ENCODE measurements at regions of chr20 and their contacts with region 1.

Region 1: DNA sequence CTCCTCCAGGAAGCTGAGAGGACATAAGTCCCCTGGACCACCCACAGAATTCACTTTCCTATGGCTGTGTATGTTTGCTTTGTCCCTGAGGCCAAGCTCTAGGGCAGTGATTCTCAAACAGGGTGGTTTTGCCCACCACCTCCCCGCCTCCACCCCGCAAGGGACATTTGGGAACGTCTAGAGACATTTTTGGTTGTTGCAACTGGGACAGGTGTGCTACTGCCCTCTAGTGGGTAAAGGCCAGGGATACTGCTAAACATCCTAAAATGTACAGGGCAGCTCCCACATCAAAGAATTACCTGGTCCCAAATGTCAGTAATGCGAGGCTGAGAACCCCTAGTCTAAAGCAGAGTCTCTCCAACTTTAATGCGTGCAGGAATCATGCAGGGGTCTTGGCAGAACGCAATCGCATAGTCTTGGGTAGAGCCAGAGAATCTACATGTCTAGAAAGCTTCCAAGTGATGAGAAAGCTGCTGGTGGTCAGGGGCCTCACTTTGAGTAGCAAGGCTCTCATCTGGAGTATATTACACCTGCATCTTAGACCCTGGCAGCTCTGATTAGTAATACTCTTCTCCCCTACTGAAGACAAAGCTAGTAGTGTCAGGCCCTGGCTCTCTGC is 5.1 kb downstream of the KCNS1 start:
- DNase-seq: peak in 8 of 9 donors; percentile 28 to 68 (median 58)
- ATAC-seq: peak; percentile 76
- H3K4me3 ChIP-seq: no peak overlapping the region
- H3K4me3 Mint-ChIP-seq: peak overlapping the region in 1 of 10 donors; percentile 29
- H3K27ac ChIP-seq: no peak overlapping the region
- H3K27ac Mint-ChIP-seq: peak overlapping the region in 2 of 9 donors; percentile 30 to 41
- H3K4me1 ChIP-seq: peaks cover 0 to 8% of the 10 kb centered on the region in 2 donors
- H3K4me1 Mint-ChIP-seq: peaks cover 5 to 24% (median 15%) of the 10 kb centered on the region in 7 donors
- H3K27me3 ChIP-seq: peaks cover 7 to 21% of the 10 kb centered on the region in 2 donors
- H3K27me3 Mint-ChIP-seq: peaks cover 32 to 38% (median 33%) of the 10 kb centered on the region in 5 donors

Region 2: GRCh38 chr20:44747166-44748004 is 348.5 kb before region 1 on chr20:
- CTCF ChIA-PET with region 1: interaction called, 10 read pairs
- POLR2A ChIA-PET with region 1: no interaction called
- intact Hi-C with region 1: loop called in 1 of 2 experiments (anchors 2 kb)
- DNase-seq: peak in 8 of 9 donors; percentile 28 to 53 (median 42)
- ATAC-seq: peak; percentile 59
- H3K4me3 ChIP-seq: no peak overlapping the region
- H3K4me3 Mint-ChIP-seq: peak overlapping the region; percentile 28 to 83 (median 69)
- H3K27ac ChIP-seq: no peak overlapping the region
- H3K27ac Mint-ChIP-seq: peak overlapping the region in 3 of 9 donors; percentile 9 to 80 (median 29)
- H3K4me1 ChIP-seq: peaks cover 0 to 6% of the 10 kb centered on the region in 2 donors
- H3K4me1 Mint-ChIP-seq: peaks cover 9 to 18% (median 16%) of the 10 kb centered on the region in 7 donors
- H3K27me3 ChIP-seq: peaks cover 0 to 4% of the 10 kb centered on the region in 2 donors
- H3K27me3 Mint-ChIP-seq: peaks cover 10 to 41% (median 31%) of the 10 kb centered on the region in 5 donors

Region 3: DNA sequence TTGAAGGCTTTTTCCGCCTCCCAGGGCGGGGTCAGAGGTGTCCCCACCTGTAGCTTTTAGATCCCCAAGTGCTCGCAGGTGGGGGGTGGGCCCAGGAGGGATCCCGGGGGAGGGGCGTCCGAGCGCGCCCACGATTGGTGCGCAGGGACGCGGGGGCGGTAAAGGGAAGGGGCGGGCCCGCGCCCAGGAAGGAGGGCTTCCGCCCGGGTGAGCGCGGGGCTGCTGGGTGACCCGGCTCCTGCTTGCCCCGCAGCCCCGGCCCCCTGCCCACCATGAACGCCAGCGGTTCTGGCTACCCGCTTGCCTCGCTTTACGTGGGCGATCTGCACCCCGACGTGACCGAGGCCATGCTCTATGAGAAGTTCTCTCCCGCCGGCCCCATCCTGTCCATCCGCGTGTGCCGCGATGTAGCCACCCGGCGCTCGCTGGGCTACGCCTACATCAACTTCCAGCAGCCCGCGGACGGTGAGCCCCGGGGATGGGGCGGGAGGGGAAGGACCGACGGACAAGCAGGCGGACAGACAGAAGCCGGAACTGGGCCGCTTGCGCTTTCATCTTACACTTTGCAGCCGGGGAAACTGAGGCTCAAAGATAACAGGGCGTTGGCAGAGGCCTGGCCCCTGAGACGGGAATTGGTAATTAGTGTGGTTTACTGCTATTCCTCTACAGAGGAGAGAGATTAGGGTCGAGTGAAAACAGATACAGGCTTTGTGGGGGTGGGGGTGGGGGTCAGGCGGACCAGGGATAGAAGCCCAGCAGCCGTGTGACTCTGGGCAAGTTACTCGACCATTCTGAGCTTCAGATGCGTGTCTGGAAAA is 185.8 kb before region 1 on chr20 and contains the start of gene PABPC1L:
- CTCF ChIA-PET with region 1: no interaction called
- POLR2A ChIA-PET with region 1: no interaction called
- intact Hi-C with region 1: loop called (anchors 1 to 5 kb)
- DNase-seq: peak; percentile 58 to 86 (median 71)
- ATAC-seq: peak; percentile 97
- H3K4me3 ChIP-seq: peak within 1 kb of the TSS; percentile 69
- H3K4me3 Mint-ChIP-seq: peak within 1 kb of the TSS; percentile 75 to 89 (median 85)
- H3K27ac ChIP-seq: peak within 1 kb of the TSS; percentile 53
- H3K27ac Mint-ChIP-seq: peak within 1 kb of the TSS; percentile 46 to 83 (median 78)
- H3K4me1 ChIP-seq: peaks cover 6 to 17% of the 10 kb centered on the region in 2 donors
- H3K4me1 Mint-ChIP-seq: peaks cover 12 to 47% (median 38%) of the 10 kb centered on the region in 7 donors
- H3K27me3 ChIP-seq: no peaks in the 10 kb centered on the region
- H3K27me3 Mint-ChIP-seq: no peaks in the 10 kb centered on the region
- total RNA-seq, gene PABPC1L: 34.0 to 71.7 (median 59.0) TPM

Region 4: GRCh38 chr20:44960103-44960852 is 135.6 kb before region 1 on chr20 and contains the start of gene TOMM34:
- CTCF ChIA-PET with region 1: interaction called, 4 read pairs
- POLR2A ChIA-PET with region 1: no interaction called
- intact Hi-C with region 1: loop called in 1 of 2 experiments (anchors 2 kb)
- DNase-seq: peak; percentile 87 to 98 (median 91)
- ATAC-seq: peak; percentile 97
- H3K4me3 ChIP-seq: peak within 1 kb of the TSS; percentile 71
- H3K4me3 Mint-ChIP-seq: peak within 1 kb of the TSS; percentile 84 to 100 (median 96)
- H3K27ac ChIP-seq: peak within 1 kb of the TSS; percentile 75
- H3K27ac Mint-ChIP-seq: peak within 1 kb of the TSS; percentile 79 to 98 (median 93)
- H3K4me1 ChIP-seq: peaks cover 22 to 24% of the 10 kb centered on the region in 2 donors
- H3K4me1 Mint-ChIP-seq: peaks cover 26 to 71% (median 58%) of the 10 kb centered on the region in 7 donors
- H3K27me3 ChIP-seq: no peaks in the 10 kb centered on the region
- H3K27me3 Mint-ChIP-seq: no peaks in the 10 kb centered on the region
- total RNA-seq, gene TOMM34: 7.0 to 22.5 (median 8.6) TPM

Region 5: GRCh38 chr20:45044084-45044573 is 51.7 kb before region 1 on chr20:
- CTCF ChIA-PET with region 1: interaction called, 33 read pairs
- POLR2A ChIA-PET with region 1: no interaction called
- intact Hi-C with region 1: loop called (anchors 1 kb)
- DNase-seq: peak in 7 of 9 donors; percentile 27 to 69 (median 60)
- ATAC-seq: peak; percentile 92
- H3K4me3 ChIP-seq: no peak overlapping the region
- H3K4me3 Mint-ChIP-seq: peak overlapping the region in 5 of 10 donors; percentile 0 to 31 (median 0)
- H3K27ac ChIP-seq: no peak overlapping the region
- H3K27ac Mint-ChIP-seq: peak overlapping the region; percentile 5 to 78 (median 61)
- H3K4me1 ChIP-seq: peaks cover 22 to 23% of the 10 kb centered on the region in 2 donors
- H3K4me1 Mint-ChIP-seq: peaks cover 34 to 85% (median 75%) of the 10 kb centered on the region in 7 donors
- H3K27me3 ChIP-seq: no peaks in the 10 kb centered on the region
- H3K27me3 Mint-ChIP-seq: no peaks in the 10 kb centered on the region

Region 6: DNA sequence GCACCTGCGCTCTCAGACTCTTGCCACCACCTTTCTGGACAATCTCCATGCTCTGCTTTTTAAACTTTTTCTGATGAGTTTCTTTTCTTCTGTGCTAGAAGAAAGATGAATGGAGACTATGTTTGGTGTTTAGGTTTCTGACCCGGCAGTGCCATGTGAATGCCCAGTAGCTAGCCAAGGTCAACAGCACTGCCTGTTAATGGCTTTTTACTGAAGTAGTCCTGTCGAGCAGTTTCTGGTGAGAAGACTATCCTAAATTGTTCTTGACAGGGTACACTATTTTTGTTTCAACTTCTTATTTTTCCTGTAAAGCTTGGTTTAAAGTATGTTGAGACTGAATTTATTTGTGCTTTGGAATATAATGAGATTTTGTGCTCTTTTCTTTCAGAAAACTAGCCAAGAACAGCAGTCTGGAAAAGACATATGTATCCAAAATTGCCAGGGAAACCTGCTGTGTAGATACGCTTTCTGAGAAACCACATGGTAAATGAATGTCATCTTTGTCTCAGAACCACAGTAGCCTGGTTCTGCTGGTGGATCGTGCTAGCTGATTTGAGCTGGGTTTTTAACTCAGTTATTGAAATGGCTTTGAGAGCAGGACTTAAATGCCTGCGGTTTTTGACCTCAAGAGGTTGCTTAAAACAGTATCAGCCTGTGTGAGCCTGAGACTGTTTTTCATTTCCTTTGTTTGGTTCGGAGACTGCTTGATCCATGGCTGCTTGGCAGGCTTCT is 43.0 kb before region 1 on chr20:
- CTCF ChIA-PET with region 1: interaction called, 16 read pairs
- POLR2A ChIA-PET with region 1: no interaction called
- intact Hi-C with region 1: loop called in 1 of 2 experiments (anchors 2 kb)
- DNase-seq: peak in 5 of 9 donors; percentile 12 to 25 (median 17)
- ATAC-seq: peak; percentile 83
- H3K4me3 ChIP-seq: no peak overlapping the region
- H3K4me3 Mint-ChIP-seq: peak overlapping the region in 9 of 10 donors; percentile 17 to 61 (median 46)
- H3K27ac ChIP-seq: peak overlapping the region; percentile 43
- H3K27ac Mint-ChIP-seq: peak overlapping the region; percentile 17 to 89 (median 79)
- H3K4me1 ChIP-seq: peaks cover 48 to 56% of the 10 kb centered on the region in 2 donors
- H3K4me1 Mint-ChIP-seq: peaks cover 64 to 96% (median 90%) of the 10 kb centered on the region in 7 donors
- H3K27me3 ChIP-seq: no peaks in the 10 kb centered on the region
- H3K27me3 Mint-ChIP-seq: no peaks in the 10 kb centered on the region

Region 7: DNA sequence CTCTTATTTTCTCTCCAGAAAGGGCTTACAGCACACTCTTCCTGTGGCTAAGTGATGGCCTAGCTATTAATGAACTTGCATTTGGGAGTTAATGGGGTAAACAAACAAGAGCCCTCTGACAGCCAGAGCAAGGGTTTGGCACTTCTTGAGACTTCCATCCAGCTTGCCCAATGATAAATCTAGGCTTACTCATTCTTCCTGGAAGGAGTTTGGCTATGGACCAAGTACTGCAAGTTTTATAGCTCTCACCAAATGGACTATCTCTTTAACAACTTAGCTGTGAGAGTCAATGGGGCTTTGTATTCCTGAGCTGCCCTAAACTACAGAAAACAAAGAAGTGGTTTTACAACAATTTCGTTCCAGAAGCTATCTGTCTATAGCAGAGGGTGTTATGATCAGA is 62.1 kb after region 1 on chr20:
- CTCF ChIA-PET with region 1: no interaction called
- POLR2A ChIA-PET with region 1: no interaction called
- intact Hi-C with region 1: no loop called
- DNase-seq: no peak
- ATAC-seq: no peak
- H3K4me3 ChIP-seq: no peak overlapping the region
- H3K4me3 Mint-ChIP-seq: no peak overlapping the region
- H3K27ac ChIP-seq: no peak overlapping the region
- H3K27ac Mint-ChIP-seq: no peak overlapping the region
- H3K4me1 ChIP-seq: no peaks in the 10 kb centered on the region
- H3K4me1 Mint-ChIP-seq: peaks cover 0 to 2% (median 0%) of the 10 kb centered on the region in 7 donors
- H3K27me3 ChIP-seq: no peaks in the 10 kb centered on the region
- H3K27me3 Mint-ChIP-seq: peaks cover 24 to 66% (median 50%) of the 10 kb centered on the region in 5 donors

Region 8: DNA sequence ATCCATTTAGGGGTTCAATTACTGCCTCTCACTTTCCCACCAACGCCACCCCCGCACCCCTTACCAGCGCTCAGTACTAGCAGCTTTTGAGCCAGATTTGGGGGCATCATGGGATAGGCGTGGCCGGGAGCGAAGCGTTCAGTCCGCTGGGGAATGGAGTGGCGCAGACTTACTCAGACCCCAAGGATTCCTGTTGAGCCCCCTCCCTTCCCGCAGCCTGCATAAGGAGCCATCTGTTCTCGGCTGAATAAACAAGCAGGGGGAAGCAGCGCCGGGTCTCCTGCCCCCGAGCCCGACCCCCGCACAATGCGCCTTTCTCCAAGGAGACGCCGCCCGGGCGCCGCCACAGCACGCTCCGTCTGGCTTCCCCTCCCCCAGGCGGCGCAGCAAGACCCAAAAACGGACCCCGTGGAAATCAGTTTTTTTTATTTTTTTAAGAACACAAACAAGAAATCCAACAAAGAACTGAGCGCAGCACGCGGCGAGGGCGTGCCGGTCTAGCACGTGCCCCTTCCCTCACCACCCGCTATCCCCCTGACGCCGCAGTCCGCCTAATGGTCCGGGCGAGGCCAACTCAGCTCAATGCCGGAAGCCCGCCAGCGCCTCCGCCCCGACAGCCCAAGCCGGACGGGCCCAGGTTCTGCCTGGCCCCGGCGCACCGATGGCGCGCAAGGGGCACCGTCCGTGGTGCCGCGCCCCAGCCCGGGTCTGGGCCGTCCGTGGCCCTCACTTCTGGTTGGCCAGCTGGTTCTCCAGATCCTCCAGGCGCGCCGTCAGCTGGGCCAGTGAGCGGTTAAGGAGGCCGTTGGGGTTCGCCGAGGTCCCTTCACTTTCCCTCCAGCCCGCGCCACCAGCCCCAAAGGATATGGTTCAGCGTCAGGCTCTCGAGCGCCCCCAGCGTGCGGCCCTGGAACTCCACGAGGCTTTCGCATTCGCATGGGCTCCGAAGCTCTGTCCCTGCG is 197.5 kb after region 1 on chr20:
- CTCF ChIA-PET with region 1: interaction called, 4 read pairs
- POLR2A ChIA-PET with region 1: no interaction called
- intact Hi-C with region 1: loop called (anchors 1 to 2 kb)
- DNase-seq: peak; percentile 33 to 89 (median 68)
- ATAC-seq: peak; percentile 93
- H3K4me3 ChIP-seq: peak overlapping the region; percentile 54
- H3K4me3 Mint-ChIP-seq: peak overlapping the region; percentile 57 to 83 (median 78)
- H3K27ac ChIP-seq: no peak overlapping the region
- H3K27ac Mint-ChIP-seq: no peak overlapping the region
- H3K4me1 ChIP-seq: peaks cover 4 to 14% of the 10 kb centered on the region in 2 donors
- H3K4me1 Mint-ChIP-seq: peaks cover 4 to 21% (median 11%) of the 10 kb centered on the region in 7 donors
- H3K27me3 ChIP-seq: peaks cover 0 to 10% of the 10 kb centered on the region in 2 donors
- H3K27me3 Mint-ChIP-seq: peaks cover 31 to 48% (median 38%) of the 10 kb centered on the region in 5 donors